Right ventricle myocardium superior (tissue), 1 donor: ENCODE measurements at regions of chr19 and their contacts with region 1.

Region 1: GRCh38 chr19:3365836-3366752 is at the start of gene NFIC:
- DNase-seq: peak; percentile 88
- ATAC-seq: peak; percentile 65
- total RNA-seq, gene NFIC: 153 TPM

Region 2: DNA sequence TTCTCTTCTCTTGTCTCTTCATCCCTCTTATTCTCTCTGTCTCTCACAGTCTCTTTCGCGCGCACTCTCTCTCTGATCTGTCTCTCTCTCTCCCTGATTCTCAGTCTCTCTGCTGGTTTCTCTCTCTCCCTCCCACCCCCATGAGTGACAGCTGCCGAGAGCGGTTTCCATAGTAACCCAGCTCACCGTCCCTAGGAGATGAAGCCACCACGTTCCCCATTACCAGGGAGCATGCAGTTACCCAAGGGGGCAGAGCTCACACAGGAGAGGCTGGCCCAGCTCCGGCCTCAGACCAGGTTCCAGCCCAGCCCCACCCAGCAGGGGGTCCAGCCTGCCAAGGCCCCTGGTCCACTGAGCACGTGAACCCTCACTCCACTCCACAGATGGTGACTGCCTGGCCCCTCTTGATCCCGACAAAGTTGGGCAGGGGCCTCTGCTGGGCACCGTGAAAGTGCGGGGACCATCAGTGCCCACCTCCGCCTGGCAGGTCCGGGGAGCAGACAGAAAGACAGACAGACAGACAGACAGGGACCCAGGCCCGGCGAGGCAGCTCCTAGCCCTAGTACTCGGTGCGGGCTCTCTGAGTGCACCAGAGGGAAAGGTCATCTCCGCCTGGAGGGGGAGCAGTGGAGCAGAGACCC is 91.0 kb before region 1 on chr19:
- intact Hi-C with region 1: no loop called
- DNase-seq: no peak
- ATAC-seq: no peak

Region 3: GRCh38 chr19:3403489-3404323 is 37.6 kb after region 1 on chr19:
- intact Hi-C with region 1: loop called (anchors 5 kb)
- DNase-seq: peak; percentile 93
- ATAC-seq: peak; percentile 73

Region 4: DNA sequence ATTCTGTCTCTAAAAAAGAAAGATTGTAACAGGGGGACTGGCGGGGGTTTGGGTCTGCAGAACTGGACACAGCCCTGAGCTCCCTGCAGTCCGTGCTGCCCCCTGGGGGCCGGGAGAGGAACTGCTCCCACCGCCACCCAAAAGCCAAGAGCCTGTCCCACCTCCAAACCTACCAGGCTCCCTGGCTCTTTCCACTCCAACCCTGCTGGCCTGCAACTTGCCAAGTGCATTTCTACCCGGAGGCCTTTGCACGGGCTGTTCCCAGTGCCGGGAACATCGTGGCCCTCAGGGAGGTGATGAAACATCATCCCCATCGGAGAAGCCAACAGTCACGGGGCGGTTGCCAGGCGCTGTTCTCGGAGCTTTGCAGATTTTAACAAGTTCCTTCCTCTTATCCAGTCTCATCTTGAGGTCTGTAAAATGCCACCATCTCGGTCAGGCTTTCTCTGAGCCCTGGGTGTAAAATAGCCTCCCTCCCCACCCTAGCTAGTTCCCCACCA is 63.5 kb after region 1 on chr19:
- intact Hi-C with region 1: loop called (anchors 10 kb)
- DNase-seq: peak; percentile 96
- ATAC-seq: peak; percentile 76